ENCODE measurements at regions of chr6 and their contacts with region 1.

Region 1: DNA sequence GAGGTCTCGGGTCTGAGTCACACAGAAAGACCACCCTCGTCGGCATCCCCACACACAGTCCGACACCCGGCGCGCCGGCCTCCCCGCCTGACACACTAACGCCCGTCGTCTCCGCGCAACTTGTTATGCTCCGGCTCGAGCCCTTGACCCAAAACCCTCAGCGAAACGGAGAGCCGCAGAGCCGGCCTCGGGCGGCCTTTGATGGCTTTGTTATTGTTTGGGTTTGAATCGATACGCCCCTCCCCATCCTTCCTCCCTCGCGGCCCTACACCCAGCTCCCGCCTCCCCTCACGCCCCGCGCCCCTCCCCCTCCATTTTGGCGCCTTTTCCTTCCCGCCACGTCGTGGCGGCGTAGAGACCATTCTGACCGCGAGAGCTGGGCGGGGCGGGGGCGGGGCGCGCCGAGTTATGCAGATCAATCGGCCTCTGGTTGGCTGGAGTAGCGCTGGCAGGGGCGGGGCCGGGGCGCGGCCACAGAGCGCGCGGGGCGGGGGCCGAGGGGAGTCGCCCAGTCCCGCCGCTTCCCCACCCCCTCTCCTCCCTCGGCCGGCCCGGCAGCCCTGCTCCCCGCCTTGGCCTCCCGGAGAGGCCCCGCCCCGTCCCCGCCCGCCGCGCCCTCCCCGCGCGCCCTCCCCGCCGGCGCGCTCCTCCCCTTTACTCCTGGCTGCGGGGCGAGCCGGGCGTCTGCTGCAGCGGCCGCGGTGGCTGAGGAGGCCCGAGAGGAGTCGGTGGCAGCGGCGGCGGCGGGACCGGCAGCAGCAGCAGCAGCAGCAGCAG is at the start of gene PIM1:
- DNase-seq: peak; percentile 93
- H3K4me3 Mint-ChIP-seq: peak within 1 kb of the TSS; percentile 94
- H3K27ac Mint-ChIP-seq: peak within 1 kb of the TSS; percentile 95
- H3K4me1 Mint-ChIP-seq: peaks cover 35% of the 10 kb centered on the region
- H3K27me3 Mint-ChIP-seq: no peaks in the 10 kb centered on the region
- total RNA-seq, gene PIM1: 151 and 161 TPM in 2 replicates

Region 2: GRCh38 chr6:36839749-36840431 is 329.8 kb before region 1 on chr6:
- intact Hi-C with region 1: no loop called
- DNase-seq: peak; percentile 29
- H3K4me3 Mint-ChIP-seq: peak overlapping the region; percentile 68
- H3K27ac Mint-ChIP-seq: no peak overlapping the region
- H3K4me1 Mint-ChIP-seq: peaks cover 5% of the 10 kb centered on the region
- H3K27me3 Mint-ChIP-seq: peaks cover 32% of the 10 kb centered on the region

Region 3: GRCh38 chr6:36985808-36986703 is 183.6 kb before region 1 on chr6 and contains the start of gene MTCH1:
- intact Hi-C with region 1: no loop called
- DNase-seq: peak; percentile 86
- H3K4me3 Mint-ChIP-seq: peak within 1 kb of the TSS; percentile 98
- H3K27ac Mint-ChIP-seq: peak within 1 kb of the TSS; percentile 96
- H3K4me1 Mint-ChIP-seq: peaks cover 16% of the 10 kb centered on the region
- H3K27me3 Mint-ChIP-seq: peaks cover 7% of the 10 kb centered on the region
- total RNA-seq, gene MTCH1: 117 and 119 TPM in 2 replicates

Region 4: DNA sequence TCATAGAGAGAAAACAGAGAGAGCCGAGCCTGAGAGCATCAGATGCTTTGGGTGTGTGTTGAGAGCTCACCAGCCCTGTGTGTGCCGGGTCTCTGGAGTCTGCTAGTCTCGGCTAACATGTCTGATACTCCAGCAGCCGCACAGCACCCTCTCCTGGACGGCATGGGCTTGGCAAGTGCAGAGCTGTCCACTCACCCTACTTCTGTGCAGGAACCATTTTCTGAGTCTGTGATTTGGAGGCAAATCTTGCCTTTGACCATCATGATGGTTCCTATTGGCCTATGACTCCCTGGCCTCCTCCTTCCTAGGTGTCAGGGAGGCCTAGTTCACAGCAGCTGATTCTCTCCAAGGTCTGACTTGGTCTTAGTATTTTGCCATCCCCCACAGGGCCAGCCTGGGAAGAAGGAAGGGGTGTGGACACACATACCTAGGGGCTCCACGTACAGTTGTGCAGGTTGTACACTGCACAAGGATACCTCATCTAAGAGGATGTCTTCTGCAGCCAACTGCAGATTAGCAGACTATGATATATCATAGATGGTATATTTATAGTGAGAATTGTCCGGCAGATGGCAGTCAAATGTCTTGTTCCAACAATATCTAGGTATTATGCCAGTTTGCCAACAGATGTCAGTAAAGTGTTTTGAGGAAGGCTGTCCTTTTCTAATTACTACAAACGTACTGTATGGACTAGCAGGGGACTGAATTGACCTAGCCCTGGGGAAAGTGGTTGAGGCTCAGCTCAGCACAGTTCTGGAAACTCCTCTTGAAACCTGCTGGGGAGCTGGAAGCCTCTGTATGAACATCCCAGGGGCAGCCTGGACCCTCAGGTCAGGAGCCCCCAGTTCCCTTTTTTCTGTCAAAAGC is 151.3 kb before region 1 on chr6:
- intact Hi-C with region 1: loop called (anchors 1 kb)
- DNase-seq: peak; percentile 87
- H3K4me3 Mint-ChIP-seq: no peak overlapping the region
- H3K27ac Mint-ChIP-seq: peak overlapping the region; percentile 78
- H3K4me1 Mint-ChIP-seq: peaks cover 46% of the 10 kb centered on the region
- H3K27me3 Mint-ChIP-seq: no peaks in the 10 kb centered on the region

Region 5: GRCh38 chr6:37051138-37052026 is 118.3 kb before region 1 on chr6:
- intact Hi-C with region 1: loop called (anchors 1 kb)
- DNase-seq: peak; percentile 77
- H3K4me3 Mint-ChIP-seq: peak overlapping the region; percentile 47
- H3K27ac Mint-ChIP-seq: peak overlapping the region; percentile 99
- H3K4me1 Mint-ChIP-seq: peaks cover 54% of the 10 kb centered on the region
- H3K27me3 Mint-ChIP-seq: no peaks in the 10 kb centered on the region

Region 6: GRCh38 chr6:37110500-37111461 is 58.9 kb before region 1 on chr6:
- intact Hi-C with region 1: loop called (anchors 2 kb)
- DNase-seq: no peak
- H3K4me3 Mint-ChIP-seq: no peak overlapping the region
- H3K27ac Mint-ChIP-seq: peak overlapping the region; percentile 40
- H3K4me1 Mint-ChIP-seq: peaks cover 13% of the 10 kb centered on the region
- H3K27me3 Mint-ChIP-seq: no peaks in the 10 kb centered on the region

Region 7: GRCh38 chr6:37155394-37156312 is 14.0 kb before region 1 on chr6:
- intact Hi-C with region 1: loop called (anchors 2 kb)
- DNase-seq: peak; percentile 31
- H3K4me3 Mint-ChIP-seq: no peak overlapping the region
- H3K27ac Mint-ChIP-seq: peak overlapping the region; percentile 65
- H3K4me1 Mint-ChIP-seq: peaks cover 25% of the 10 kb centered on the region
- H3K27me3 Mint-ChIP-seq: no peaks in the 10 kb centered on the region

Region 8: GRCh38 chr6:37190159-37190535 is 20.5 kb after region 1 on chr6:
- intact Hi-C with region 1: loop called (anchors 2 kb)
- DNase-seq: no peak
- H3K4me3 Mint-ChIP-seq: no peak overlapping the region
- H3K27ac Mint-ChIP-seq: peak overlapping the region; percentile 76
- H3K4me1 Mint-ChIP-seq: peaks cover 53% of the 10 kb centered on the region
- H3K27me3 Mint-ChIP-seq: no peaks in the 10 kb centered on the region